ENCODE measurements at regions of chr2 and their contacts with region 1.

Region 1: GRCh38 chr2:127064642-127065250 is 42.2 kb downstream of the BIN1 start:
- DNase-seq: peak; percentile 92
- H3K4me3 ChIP-seq: no peak overlapping the region
- H3K27me3 ChIP-seq: no peaks in the 10 kb centered on the region
- CTCF ChIP-seq: peak; percentile 29

Region 2: DNA sequence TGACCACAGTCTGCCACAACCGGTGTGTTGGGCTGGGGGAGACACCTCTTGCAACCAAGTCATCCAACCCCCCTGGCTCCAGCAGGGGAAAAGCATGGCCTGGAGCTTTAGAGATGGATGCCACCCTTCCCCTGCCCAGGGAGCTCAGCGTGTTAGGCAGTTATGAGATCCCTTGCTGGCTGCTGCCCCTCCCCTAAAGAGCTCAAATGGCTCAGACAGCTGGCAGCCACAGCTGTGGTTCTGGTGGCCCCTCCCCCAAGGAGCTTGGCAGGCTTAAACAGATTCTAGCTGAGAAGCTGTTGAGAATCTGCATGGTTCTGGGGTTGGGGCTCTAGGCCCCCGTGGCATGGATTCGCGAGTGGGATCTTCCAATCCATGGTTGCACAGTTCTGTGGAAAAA is 101.4 kb before region 1 on chr2:
- CTCF ChIA-PET with region 1: no interaction called
- POLR2A ChIA-PET with region 1: no interaction called
- DNase-seq: no peak
- H3K4me3 ChIP-seq: no peak overlapping the region
- H3K27me3 ChIP-seq: peaks cover 1% of the 10 kb centered on the region; the same call in 1 of the 2 replicates
- CTCF ChIP-seq: no peak

Region 3: GRCh38 chr2:127080938-127081755 is 16.4 kb after region 1 on chr2:
- CTCF ChIA-PET with region 1: interaction called, 20 read pairs
- POLR2A ChIA-PET with region 1: no interaction called
- DNase-seq: no peak
- H3K4me3 ChIP-seq: no peak overlapping the region
- H3K27me3 ChIP-seq: no peaks in the 10 kb centered on the region
- CTCF ChIP-seq: no peak

Region 4: DNA sequence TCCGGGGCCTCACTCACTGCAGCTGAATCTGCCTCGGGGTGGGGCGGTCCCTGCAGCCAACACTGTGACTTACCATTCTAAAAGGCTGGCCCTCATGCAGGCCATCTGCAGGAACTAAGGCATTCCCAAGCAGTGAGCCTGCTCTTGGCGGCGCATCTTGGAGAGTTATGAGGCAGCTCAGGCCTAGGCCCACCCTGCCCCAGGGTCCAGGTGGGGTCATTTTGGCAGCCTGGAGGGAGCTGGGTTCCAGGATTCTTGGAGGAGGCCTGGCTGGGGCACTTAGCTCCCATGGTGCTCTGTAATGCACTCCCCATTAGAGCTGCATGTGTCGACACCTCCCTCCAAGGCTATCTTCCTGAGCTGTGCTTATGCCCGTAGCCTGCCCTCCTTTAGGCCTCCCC is 57.0 kb after region 1 on chr2:
- CTCF ChIA-PET with region 1: interaction called, 10 read pairs
- POLR2A ChIA-PET with region 1: no interaction called
- DNase-seq: no peak
- H3K4me3 ChIP-seq: no peak overlapping the region
- H3K27me3 ChIP-seq: no peaks in the 10 kb centered on the region; the same call in 1 of the 2 replicates
- CTCF ChIP-seq: no peak

Measured in BJ (cell line).